ENCODE measurements at regions of chr6 and their contacts with region 1.

Region 1: DNA sequence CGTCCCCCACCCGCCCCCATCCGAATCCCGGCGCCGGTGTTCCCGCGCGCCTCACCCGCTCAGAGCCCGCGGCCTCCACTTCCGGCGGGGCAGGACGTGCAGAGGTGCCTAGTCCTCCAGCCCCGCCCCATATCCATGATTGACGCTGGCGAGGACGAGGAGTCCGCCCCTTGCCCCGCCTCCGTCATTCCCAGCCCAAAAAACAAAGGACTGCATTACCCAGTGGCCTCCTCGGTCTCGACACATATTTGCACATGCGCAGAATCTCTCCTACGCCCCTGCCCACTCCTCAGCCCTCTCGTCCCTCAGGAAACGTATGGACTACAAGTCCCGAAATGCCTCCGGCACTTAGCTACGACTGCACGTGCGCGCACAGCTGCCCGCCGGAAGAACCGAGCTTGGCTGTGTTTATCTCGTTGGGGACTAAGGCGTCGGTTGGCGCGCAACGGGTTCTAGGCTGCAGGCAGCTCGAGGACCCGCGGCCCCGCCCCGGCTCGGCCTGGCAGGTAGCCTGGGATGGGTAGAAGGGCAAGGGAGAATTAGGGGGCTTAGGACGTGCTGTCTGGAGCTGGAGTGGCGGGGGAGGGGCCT is at the starts of genes KLHDC3 and MEA1:
- DNase-seq: peak; percentile 100
- H3K4me3 ChIP-seq: peak within 1 kb of the TSS; percentile 79 to 88 (median 85)
- H3K27ac ChIP-seq: peak within 1 kb of the TSS; percentile 83 to 86 (median 84)
- H3K4me1 ChIP-seq: peaks cover 0 to 53% (median 42%) of the 10 kb centered on the region in 4 donors
- H3K27me3 ChIP-seq: no peaks in the 10 kb centered on the region
- CTCF ChIP-seq: no peak
- EP300 ChIP-seq: no peak
- POLR2A ChIP-seq: peak in 1 of 2 donors; percentile 36
- total RNA-seq, gene KLHDC3: 68.4 to 158 (median 105) TPM
- total RNA-seq, gene MEA1: 49.0 to 91.5 (median 71.5) TPM

Region 2: DNA sequence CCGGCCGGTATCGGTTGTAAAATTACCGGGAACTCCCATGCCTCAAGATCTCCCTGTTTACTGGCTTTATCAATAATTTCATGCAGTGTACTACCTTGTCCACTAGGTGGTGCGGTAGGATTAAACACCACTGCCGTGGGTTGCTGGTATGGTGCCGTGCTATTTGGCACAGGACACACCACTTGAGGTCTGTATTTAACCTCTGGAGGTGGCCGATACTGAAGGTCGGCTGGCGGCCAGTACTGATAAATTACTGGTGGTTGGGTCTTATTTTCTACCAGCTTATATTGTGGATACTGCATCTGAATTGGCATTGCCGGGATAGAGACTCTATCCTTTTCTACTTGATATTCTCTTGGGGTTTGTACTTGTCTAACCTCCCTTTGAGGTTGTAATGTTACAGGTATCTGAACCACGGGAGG is 112.4 kb before region 1 on chr6:
- intact Hi-C with region 1: loop called (anchors 5 kb)
- DNase-seq: peak; percentile 90
- H3K4me3 ChIP-seq: no peak overlapping the region
- H3K27ac ChIP-seq: no peak overlapping the region
- H3K4me1 ChIP-seq: peaks cover 0 to 7% (median 1%) of the 10 kb centered on the region in 4 donors
- H3K27me3 ChIP-seq: no peaks in the 10 kb centered on the region
- CTCF ChIP-seq: peak; percentile 85 to 89 (median 88)
- EP300 ChIP-seq: no peak
- POLR2A ChIP-seq: no peak

Region 3: DNA sequence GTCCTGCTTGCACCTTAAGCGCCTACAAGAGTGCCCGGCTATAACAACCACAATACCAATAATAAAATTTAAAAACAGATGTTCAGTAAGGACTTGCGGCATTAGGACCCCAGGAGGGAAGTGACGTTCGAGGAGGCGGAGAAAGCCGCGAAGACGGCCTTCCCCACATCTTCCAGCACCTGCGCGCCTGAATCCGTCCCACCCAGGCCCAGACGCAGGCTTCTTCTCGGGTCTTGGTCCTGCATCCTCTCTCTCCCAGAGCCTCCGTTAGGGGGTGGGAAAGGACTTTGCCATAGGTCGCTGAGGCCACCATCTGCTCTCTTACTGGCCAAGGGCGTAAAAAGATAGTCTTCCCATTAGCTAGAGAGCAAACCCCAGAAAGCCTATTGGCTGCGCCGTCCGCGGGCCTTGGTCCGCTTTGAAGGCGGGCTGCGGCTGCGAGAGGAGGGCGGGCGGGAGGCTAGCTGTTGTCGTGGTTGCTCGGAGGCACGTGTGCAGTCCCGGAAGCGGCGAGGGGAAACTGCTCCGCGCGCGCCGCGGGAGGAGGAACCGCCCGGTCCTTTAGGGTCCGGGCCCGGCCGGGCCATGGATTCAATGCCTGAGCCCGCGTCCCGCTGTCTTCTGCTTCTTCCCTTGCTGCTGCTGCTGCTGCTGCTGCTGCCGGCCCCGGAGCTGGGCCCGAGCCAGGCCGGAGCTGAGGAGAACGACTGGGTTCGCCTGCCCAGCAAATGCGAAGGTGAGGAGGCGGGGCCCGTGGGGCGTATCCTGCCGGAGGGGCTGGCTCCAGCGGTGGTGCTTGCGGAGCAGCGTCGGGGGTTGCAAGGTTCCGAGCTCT is 84.7 kb before region 1 on chr6 and contains the start of gene CNPY3:
- intact Hi-C with region 1: loop called (anchors 5 kb)
- DNase-seq: peak; percentile 98
- H3K4me3 ChIP-seq: peak within 1 kb of the TSS; percentile 72 to 85 (median 74)
- H3K27ac ChIP-seq: peak within 1 kb of the TSS; percentile 88 to 93 (median 90)
- H3K4me1 ChIP-seq: peaks cover 0 to 38% (median 34%) of the 10 kb centered on the region in 4 donors
- H3K27me3 ChIP-seq: peaks cover 0 to 8% (median 3%) of the 10 kb centered on the region in 3 donors
- CTCF ChIP-seq: no peak
- EP300 ChIP-seq: no peak
- POLR2A ChIP-seq: peak; percentile 33 to 47
- total RNA-seq, gene CNPY3: 22.8 to 24.9 (median 24.1) TPM

Region 4: GRCh38 chr6:42984001-42984923 is 29.7 kb before region 1 on chr6 and contains the start of gene PPP2R5D:
- intact Hi-C with region 1: loop called (anchors 2 kb)
- DNase-seq: peak; percentile 99
- H3K4me3 ChIP-seq: peak within 1 kb of the TSS; percentile 72 to 90 (median 86)
- H3K27ac ChIP-seq: peak within 1 kb of the TSS; percentile 89 to 93 (median 92)
- H3K4me1 ChIP-seq: peaks cover 0 to 57% (median 51%) of the 10 kb centered on the region in 4 donors
- H3K27me3 ChIP-seq: no peaks in the 10 kb centered on the region
- CTCF ChIP-seq: peak in 1 of 4 experiments; percentile 9
- EP300 ChIP-seq: no peak
- POLR2A ChIP-seq: peak; percentile 82
- total RNA-seq, gene PPP2R5D: 26.7 to 41.5 (median 33.9) TPM

Region 5: DNA sequence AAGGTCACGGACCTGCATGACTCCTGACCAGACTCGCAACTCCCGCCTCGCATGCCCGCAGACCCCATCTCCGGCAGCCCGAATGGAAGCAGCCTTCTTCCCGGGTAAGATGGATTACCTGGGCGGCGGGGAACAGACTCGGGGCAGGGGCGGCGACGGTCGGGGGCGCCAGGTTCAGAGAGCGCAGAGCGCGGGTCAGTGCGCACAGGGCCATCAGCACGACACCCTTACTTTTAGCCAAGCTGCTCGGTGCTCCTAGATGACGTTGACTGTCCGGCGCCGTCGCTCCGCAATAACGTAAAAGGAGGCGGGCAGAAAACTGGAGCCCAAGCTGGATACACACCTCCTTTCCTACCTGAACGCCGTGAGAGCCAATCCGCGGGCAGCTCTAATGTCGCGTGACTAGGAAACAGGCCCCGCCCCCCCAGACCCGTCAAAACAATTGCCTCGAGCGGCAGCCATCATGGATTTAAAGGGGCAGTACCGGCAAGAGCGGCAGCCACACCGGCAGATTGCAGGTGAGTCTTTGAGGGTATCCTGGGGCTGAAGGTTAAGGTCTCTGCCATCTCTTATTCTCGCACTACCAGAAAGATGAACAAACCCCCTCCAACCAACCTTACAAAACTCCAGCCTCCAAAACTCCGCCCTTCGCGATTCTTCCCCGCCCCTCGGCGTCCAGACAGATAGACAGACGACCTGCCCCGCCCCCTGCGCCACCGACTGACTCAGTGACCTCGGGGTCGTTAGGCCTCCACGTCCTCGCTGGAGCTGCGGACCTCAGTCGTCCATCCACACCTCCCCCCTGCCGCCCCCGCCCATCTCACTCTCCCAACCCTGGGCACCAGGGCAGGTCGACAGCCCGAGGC is 45.5 kb after region 1 on chr6 and contains the starts of genes KLC4 and MRPL2:
- intact Hi-C with region 1: loop called (anchors 2 kb)
- DNase-seq: peak; percentile 99
- H3K4me3 ChIP-seq: peak within 1 kb of the TSS; percentile 74 to 97 (median 87)
- H3K27ac ChIP-seq: peak within 1 kb of the TSS; percentile 84 to 93 (median 90)
- H3K4me1 ChIP-seq: peaks cover 0 to 36% (median 23%) of the 10 kb centered on the region in 4 donors
- H3K27me3 ChIP-seq: no peaks in the 10 kb centered on the region
- CTCF ChIP-seq: no peak
- EP300 ChIP-seq: peak in 1 of 4 donors; percentile 61
- POLR2A ChIP-seq: peak; percentile 83 to 87
- total RNA-seq, gene KLC4: 23.2 to 44.9 (median 34.6) TPM
- total RNA-seq, gene MRPL2: 14.1 to 25.7 (median 18.3) TPM

Region 6: GRCh38 chr6:43143235-43144124 is 129.5 kb after region 1 on chr6:
- intact Hi-C with region 1: loop called (anchors 2 kb)
- DNase-seq: peak; percentile 97
- H3K4me3 ChIP-seq: no peak overlapping the region
- H3K27ac ChIP-seq: peak overlapping the region; percentile 8 to 63 (median 58)
- H3K4me1 ChIP-seq: peaks cover 0 to 13% (median 11%) of the 10 kb centered on the region in 4 donors
- H3K27me3 ChIP-seq: no peaks in the 10 kb centered on the region
- CTCF ChIP-seq: peak; percentile 90 to 93 (median 92)
- EP300 ChIP-seq: no peak
- POLR2A ChIP-seq: no peak

Measured in sigmoid colon (tissue), 7 donors.